Sciatic nerve (tissue), 2 donors: ENCODE measurements at regions of chr4 and their contacts with region 1.

Region 1: GRCh38 chr4:139978692-139979091 is 175.3 kb downstream of the MAML3 start:
- DNase-seq: no peak
- ATAC-seq: peak; percentile 14

Region 2: DNA sequence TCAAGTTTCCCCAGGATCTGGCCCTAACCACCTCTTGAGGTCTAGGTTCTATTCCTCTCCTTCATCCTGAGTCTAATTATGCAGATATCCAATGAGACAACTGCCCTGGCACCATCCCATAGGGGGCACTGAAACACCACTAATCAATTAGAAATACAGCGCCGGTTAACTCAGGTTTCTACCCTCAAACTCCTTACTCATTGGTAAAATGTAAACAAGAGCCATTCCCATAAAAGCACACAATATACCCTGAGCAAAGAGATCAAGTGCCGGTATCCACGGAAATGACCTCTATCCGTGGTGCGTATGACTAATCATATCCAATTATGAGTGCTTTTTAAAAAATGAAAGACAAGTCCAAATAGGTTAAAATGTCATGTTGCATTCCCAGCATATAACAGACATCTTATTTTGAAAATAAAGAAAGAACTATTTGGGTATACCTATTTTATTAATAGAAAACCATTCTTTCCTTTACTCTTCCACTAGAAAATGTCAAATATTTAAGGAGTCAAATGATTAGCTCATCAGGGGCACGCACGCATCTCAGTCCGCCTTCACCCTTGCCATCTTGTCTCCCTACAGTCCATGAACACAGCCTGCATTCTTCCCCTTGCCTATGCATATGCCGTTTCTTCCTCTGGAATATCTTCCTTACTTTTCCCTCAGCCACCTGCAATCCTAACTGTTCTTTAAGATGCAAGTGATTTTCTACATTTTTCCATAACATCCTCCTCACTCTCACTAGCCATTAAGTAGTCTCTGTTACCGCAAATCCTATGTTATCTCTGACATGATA is 34.2 kb after region 1 on chr4:
- intact Hi-C with region 1: loop called (anchors 1 kb)
- DNase-seq: no peak
- ATAC-seq: peak; percentile 89

Region 3: GRCh38 chr4:141169391-141169790 is 1190.7 kb after region 1 on chr4:
- intact Hi-C with region 1: no loop called
- DNase-seq: no peak
- ATAC-seq: no peak